GM10248 (cell line): ENCODE measurements at regions of chr4 and their contacts with region 1.

Region 1: GRCh38 chr4:123200051-123200940 is 196.3 kb upstream of the SPRY1 start:
- DNase-seq: no peak
- CTCF ChIP-seq: no peak

Region 2: DNA sequence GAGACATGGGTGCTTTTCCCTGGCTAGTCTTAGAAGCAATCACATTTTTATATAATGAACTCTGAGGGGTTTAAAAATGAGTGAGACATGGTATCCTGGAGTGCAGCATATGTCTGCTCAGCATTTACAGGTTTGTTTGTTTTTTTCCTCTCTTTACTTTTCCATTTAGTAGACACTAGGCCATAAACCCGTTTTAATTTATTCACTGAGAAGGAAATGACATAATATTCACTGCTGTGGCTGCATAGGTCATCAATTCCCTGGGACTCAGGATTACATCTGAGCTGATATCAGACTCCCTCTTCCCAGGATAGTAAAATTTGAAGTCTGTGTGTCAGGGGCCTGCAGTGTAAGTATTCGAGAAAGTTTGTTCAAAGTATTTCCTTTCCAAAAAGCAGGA is 17.4 kb after region 1 on chr4:
- CTCF ChIA-PET with region 1: interaction called, 11 read pairs
- POLR2A ChIA-PET with region 1: no interaction called
- DNase-seq: no peak
- CTCF ChIP-seq: no peak